ENCODE measurements at regions of chr4 and their contacts with region 1.

Region 1: GRCh38 chr4:89657931-89658700 is 178.8 kb downstream of the SNCA start:
- DNase-seq: peak; percentile 46
- ATAC-seq: no peak
- H3K4me3 ChIP-seq: no peak overlapping the region
- H3K27ac ChIP-seq: no peak overlapping the region
- H3K4me1 ChIP-seq: no peaks in the 10 kb centered on the region; the same call in 1 of the 2 replicates
- H3K27me3 ChIP-seq: no peaks in the 10 kb centered on the region; the same call in 1 of the 2 replicates
- CTCF ChIP-seq: peak; percentile 52
- POLR2A ChIP-seq: no peak
- RAD21 ChIP-seq: peak; percentile 57

Region 2: GRCh38 chr4:89482248-89482647 is 175.9 kb before region 1 on chr4:
- CTCF ChIA-PET with region 1: interaction called, 4 read pairs
- POLR2A ChIA-PET with region 1: no interaction called
- dilution Hi-C with region 1: no loop called
- in situ Hi-C with region 1: no loop called
- intact Hi-C with region 1: loop called (anchors 1 kb)
- DNase-seq: peak; percentile 53
- ATAC-seq: peak; percentile 56; the same call in 1 of the 2 replicates
- H3K4me3 ChIP-seq: no peak overlapping the region
- H3K27ac ChIP-seq: no peak overlapping the region
- H3K4me1 ChIP-seq: no peaks in the 10 kb centered on the region
- H3K27me3 ChIP-seq: no peaks in the 10 kb centered on the region
- CTCF ChIP-seq: peak; percentile 41
- POLR2A ChIP-seq: no peak
- RAD21 ChIP-seq: peak; percentile 26; the same call in 1 of the 2 replicates

Region 3: GRCh38 chr4:89640620-89641366 is 17.3 kb before region 1 on chr4:
- CTCF ChIA-PET with region 1: interaction called, 13 read pairs
- POLR2A ChIA-PET with region 1: no interaction called
- dilution Hi-C with region 1: no loop called
- in situ Hi-C with region 1: no loop called
- intact Hi-C with region 1: no loop called
- DNase-seq: peak; percentile 49
- ATAC-seq: peak; percentile 93
- H3K4me3 ChIP-seq: no peak overlapping the region
- H3K27ac ChIP-seq: no peak overlapping the region
- H3K4me1 ChIP-seq: no peaks in the 10 kb centered on the region
- H3K27me3 ChIP-seq: no peaks in the 10 kb centered on the region
- CTCF ChIP-seq: peak; percentile 61
- POLR2A ChIP-seq: no peak
- RAD21 ChIP-seq: peak; percentile 56

Region 4: DNA sequence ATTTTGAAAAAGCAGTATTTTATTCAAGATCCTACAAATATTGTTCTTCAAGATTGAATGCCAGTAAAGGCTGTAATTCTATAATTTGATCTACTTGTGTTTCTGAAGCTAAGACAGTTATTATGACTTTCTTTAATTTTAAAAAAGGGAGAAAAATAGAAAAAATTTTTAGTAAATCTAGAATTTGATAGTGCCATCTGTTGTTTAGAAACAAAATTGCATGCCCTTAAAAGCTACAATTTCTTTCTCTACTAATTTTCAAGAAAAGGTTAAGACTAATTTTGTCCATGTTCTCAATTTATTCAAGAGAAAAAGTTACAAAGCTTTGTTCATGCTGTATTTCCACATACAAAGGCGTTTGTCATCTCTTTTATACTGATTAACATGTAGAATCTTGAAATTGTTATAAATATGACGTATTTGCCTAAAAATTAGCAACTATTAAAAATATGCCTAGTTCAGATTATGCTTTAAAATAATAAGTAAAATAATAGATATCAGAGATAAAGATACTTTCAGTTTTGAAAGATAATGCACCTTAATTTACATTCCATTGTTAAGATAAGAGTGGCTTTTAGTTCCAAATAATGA is 211.0 kb after region 1 on chr4:
- CTCF ChIA-PET with region 1: interaction called, 9 read pairs
- POLR2A ChIA-PET with region 1: no interaction called
- dilution Hi-C with region 1: no loop called
- in situ Hi-C with region 1: loop called (anchors 10 kb)
- intact Hi-C with region 1: loop called (anchors 1 kb)
- DNase-seq: peak; percentile 5
- ATAC-seq: no peak
- H3K4me3 ChIP-seq: no peak overlapping the region
- H3K27ac ChIP-seq: no peak overlapping the region
- H3K4me1 ChIP-seq: no peaks in the 10 kb centered on the region
- H3K27me3 ChIP-seq: no peaks in the 10 kb centered on the region
- CTCF ChIP-seq: peak; percentile 56
- POLR2A ChIP-seq: no peak
- RAD21 ChIP-seq: peak; percentile 40

Region 5: GRCh38 chr4:89878611-89879010 is 220.5 kb after region 1 on chr4:
- CTCF ChIA-PET with region 1: interaction called, 5 read pairs
- POLR2A ChIA-PET with region 1: no interaction called
- dilution Hi-C with region 1: no loop called
- in situ Hi-C with region 1: loop called (anchors 10 kb)
- intact Hi-C with region 1: no loop called
- DNase-seq: no peak
- ATAC-seq: no peak
- H3K4me3 ChIP-seq: no peak overlapping the region
- H3K27ac ChIP-seq: no peak overlapping the region
- H3K4me1 ChIP-seq: no peaks in the 10 kb centered on the region
- H3K27me3 ChIP-seq: no peaks in the 10 kb centered on the region
- CTCF ChIP-seq: no peak
- POLR2A ChIP-seq: no peak
- RAD21 ChIP-seq: no peak

Region 6: GRCh38 chr4:89894649-89895550 is 236.8 kb after region 1 on chr4 and contains the start of gene MMRN1:
- CTCF ChIA-PET with region 1: interaction called, 4 read pairs
- POLR2A ChIA-PET with region 1: no interaction called
- dilution Hi-C with region 1: no loop called
- in situ Hi-C with region 1: loop called (anchors 10 kb)
- intact Hi-C with region 1: no loop called
- DNase-seq: no peak
- ATAC-seq: no peak
- H3K4me3 ChIP-seq: no peak within 1 kb of the TSS
- H3K27ac ChIP-seq: no peak within 1 kb of the TSS
- H3K4me1 ChIP-seq: no peaks in the 10 kb centered on the region
- H3K27me3 ChIP-seq: no peaks in the 10 kb centered on the region; the same call in 1 of the 2 replicates
- CTCF ChIP-seq: no peak
- POLR2A ChIP-seq: no peak
- RAD21 ChIP-seq: no peak
- total RNA-seq, gene MMRN1: not detected in 2 replicates